ENCODE measurements at regions of chr2 and their contacts with region 1.

Region 1: GRCh38 chr2:44044281-44044720 is 48.5 kb upstream of the LRPPRC start:
- DNase-seq: peak; percentile 50 to 78 (median 71)
- ATAC-seq: peak; percentile 98
- H3K4me3 ChIP-seq: no peak overlapping the region
- H3K4me3 Mint-ChIP-seq: peak overlapping the region in 1 of 10 donors; percentile 48
- H3K27ac ChIP-seq: no peak overlapping the region
- H3K27ac Mint-ChIP-seq: no peak overlapping the region
- H3K4me1 ChIP-seq: no peaks in the 10 kb centered on the region
- H3K4me1 Mint-ChIP-seq: peaks cover 0 to 2% (median 0%) of the 10 kb centered on the region in 7 donors
- H3K27me3 ChIP-seq: no peaks in the 10 kb centered on the region
- H3K27me3 Mint-ChIP-seq: peaks cover 0 to 3% (median 0%) of the 10 kb centered on the region in 5 donors

Region 2: DNA sequence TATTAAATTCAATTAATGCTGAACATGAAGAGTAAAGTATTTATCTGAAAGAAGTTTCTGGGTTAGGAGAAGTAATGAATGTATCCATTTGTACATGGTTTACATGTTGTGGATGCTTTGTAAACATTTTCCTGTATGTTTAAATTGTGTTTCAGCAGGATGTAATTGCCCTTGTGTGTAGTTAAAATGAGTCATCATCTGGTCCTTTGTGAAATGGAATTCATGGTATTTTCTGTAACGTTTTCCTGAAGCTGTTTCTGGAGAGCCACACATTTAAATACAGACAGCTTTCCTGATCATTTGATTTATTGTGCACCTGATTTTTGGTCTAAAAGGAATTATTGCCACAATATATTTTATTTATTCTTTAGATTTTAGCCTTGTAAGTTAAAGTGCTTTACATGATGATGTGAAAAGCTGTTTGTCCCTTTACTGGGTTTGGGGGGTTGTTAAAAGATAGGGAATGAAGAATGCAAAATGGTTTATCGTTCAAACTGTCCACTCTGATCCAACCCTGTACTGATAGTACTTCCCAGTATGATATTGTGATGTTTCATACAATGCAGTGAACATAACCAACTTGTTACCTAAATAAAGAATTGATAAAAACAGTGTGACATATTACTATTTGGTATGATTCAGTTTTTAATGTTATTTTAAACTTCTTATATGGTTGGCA is 189.3 kb after region 1 on chr2:
- CTCF ChIA-PET with region 1: no interaction called
- POLR2A ChIA-PET with region 1: no interaction called
- intact Hi-C with region 1: no loop called
- DNase-seq: no peak
- ATAC-seq: no peak
- H3K4me3 ChIP-seq: no peak overlapping the region
- H3K4me3 Mint-ChIP-seq: no peak overlapping the region
- H3K27ac ChIP-seq: no peak overlapping the region
- H3K27ac Mint-ChIP-seq: peak overlapping the region in 4 of 9 donors; percentile 25 to 71 (median 48)
- H3K4me1 ChIP-seq: peaks cover 16 to 17% of the 10 kb centered on the region in 2 donors
- H3K4me1 Mint-ChIP-seq: peaks cover 6 to 46% (median 36%) of the 10 kb centered on the region in 7 donors
- H3K27me3 ChIP-seq: no peaks in the 10 kb centered on the region
- H3K27me3 Mint-ChIP-seq: no peaks in the 10 kb centered on the region

Region 3: GRCh38 chr2:44244129-44244871 is 200.0 kb after region 1 on chr2:
- CTCF ChIA-PET with region 1: no interaction called
- POLR2A ChIA-PET with region 1: no interaction called
- intact Hi-C with region 1: loop called (anchors 1 kb)
- DNase-seq: peak; percentile 12 to 75 (median 64)
- ATAC-seq: peak; percentile 96
- H3K4me3 ChIP-seq: peak overlapping the region; percentile 55
- H3K4me3 Mint-ChIP-seq: peak overlapping the region; percentile 71 to 95 (median 87)
- H3K27ac ChIP-seq: peak overlapping the region; percentile 64
- H3K27ac Mint-ChIP-seq: peak overlapping the region in 8 of 9 donors; percentile 39 to 89 (median 74)
- H3K4me1 ChIP-seq: peaks cover 6 to 9% of the 10 kb centered on the region in 2 donors
- H3K4me1 Mint-ChIP-seq: peaks cover 7 to 41% (median 33%) of the 10 kb centered on the region in 7 donors
- H3K27me3 ChIP-seq: no peaks in the 10 kb centered on the region
- H3K27me3 Mint-ChIP-seq: peaks cover 0 to 7% (median 0%) of the 10 kb centered on the region in 5 donors

Region 4: DNA sequence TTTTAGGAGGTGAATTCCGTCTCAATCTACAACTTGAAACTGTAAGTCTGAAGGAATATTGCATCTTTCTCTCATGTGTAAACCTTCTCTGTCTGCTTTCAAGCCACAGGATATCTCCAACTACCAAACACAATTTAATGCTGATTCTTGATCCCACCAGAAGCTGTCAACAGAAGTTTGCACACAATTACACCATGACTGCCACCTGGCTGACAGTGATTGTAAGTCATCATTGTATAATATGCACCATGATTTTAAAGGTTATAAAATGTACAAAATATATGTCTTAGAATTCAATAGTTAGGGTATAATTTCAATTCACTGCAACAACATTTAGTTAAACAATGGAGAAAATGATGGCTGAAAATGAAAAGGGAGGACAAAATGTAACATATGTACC is 298.6 kb after region 1 on chr2:
- CTCF ChIA-PET with region 1: interaction called, 9 read pairs
- POLR2A ChIA-PET with region 1: no interaction called
- intact Hi-C with region 1: loop called (anchors 1 kb)
- DNase-seq: peak in 7 of 9 donors; percentile 14 to 45 (median 33)
- ATAC-seq: peak; percentile 60
- H3K4me3 ChIP-seq: no peak overlapping the region
- H3K4me3 Mint-ChIP-seq: no peak overlapping the region
- H3K27ac ChIP-seq: no peak overlapping the region
- H3K27ac Mint-ChIP-seq: peak overlapping the region in 2 of 9 donors; percentile 5 to 26
- H3K4me1 ChIP-seq: no peaks in the 10 kb centered on the region
- H3K4me1 Mint-ChIP-seq: peaks cover 0 to 17% (median 0%) of the 10 kb centered on the region in 7 donors
- H3K27me3 ChIP-seq: no peaks in the 10 kb centered on the region
- H3K27me3 Mint-ChIP-seq: no peaks in the 10 kb centered on the region

Region 5: DNA sequence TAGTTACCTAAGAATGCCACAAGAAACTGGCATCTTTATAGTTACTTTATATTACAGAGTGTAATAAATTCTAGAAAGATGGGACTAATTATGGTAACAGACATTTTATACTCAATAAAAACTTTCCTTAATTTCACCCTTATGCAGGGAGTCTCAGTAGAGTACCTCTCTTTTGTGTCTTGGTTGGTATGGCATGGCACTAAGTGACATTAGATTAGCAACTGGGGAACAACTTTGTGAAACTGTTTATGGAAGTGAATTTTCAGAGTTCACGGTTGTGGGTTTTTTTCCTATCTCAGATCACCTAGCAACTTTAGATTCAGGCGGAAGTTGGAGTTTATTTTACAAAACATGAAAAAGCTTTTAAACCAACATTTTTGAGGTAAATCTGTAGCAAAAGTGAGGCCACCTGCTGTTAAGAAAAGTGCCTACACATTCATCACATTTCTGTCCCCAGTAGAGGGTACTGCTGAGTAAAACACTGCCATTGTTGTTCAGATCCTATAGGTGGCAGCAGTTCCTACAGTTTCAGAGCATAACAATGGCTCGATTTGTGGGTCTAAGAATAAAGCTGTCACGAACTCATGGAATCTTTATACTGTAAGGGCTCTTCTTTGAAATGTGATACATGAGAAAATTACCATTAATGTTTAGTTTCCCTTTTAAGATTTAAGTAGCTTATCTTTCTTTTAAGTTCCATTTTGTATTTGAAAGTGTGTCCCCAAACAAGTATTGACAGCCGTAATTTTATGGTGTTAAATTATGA is 435.0 kb after region 1 on chr2:
- CTCF ChIA-PET with region 1: interaction called, 4 read pairs
- POLR2A ChIA-PET with region 1: no interaction called
- intact Hi-C with region 1: loop called (anchors 1 kb)
- DNase-seq: peak in 8 of 9 donors; percentile 23 to 79 (median 68)
- ATAC-seq: peak; percentile 100
- H3K4me3 ChIP-seq: no peak overlapping the region
- H3K4me3 Mint-ChIP-seq: peak overlapping the region in 1 of 10 donors; percentile 8
- H3K27ac ChIP-seq: no peak overlapping the region
- H3K27ac Mint-ChIP-seq: peak overlapping the region in 5 of 9 donors; percentile 5 to 55 (median 38)
- H3K4me1 ChIP-seq: peaks cover 0 to 4% of the 10 kb centered on the region in 2 donors
- H3K4me1 Mint-ChIP-seq: peaks cover 0 to 11% (median 6%) of the 10 kb centered on the region in 7 donors
- H3K27me3 ChIP-seq: no peaks in the 10 kb centered on the region
- H3K27me3 Mint-ChIP-seq: no peaks in the 10 kb centered on the region

Region 6: GRCh38 chr2:45494269-45494977 is 1450.1 kb after region 1 on chr2:
- CTCF ChIA-PET with region 1: no interaction called
- POLR2A ChIA-PET with region 1: no interaction called
- intact Hi-C with region 1: loop called in 1 of 2 experiments (anchors 1 kb)
- DNase-seq: peak in 6 of 9 donors; percentile 17 to 46 (median 28)
- ATAC-seq: peak; percentile 65
- H3K4me3 ChIP-seq: no peak overlapping the region
- H3K4me3 Mint-ChIP-seq: no peak overlapping the region
- H3K27ac ChIP-seq: no peak overlapping the region
- H3K27ac Mint-ChIP-seq: peak overlapping the region in 2 of 9 donors; percentile 23 to 33
- H3K4me1 ChIP-seq: no peaks in the 10 kb centered on the region
- H3K4me1 Mint-ChIP-seq: peaks cover 3 to 17% (median 10%) of the 10 kb centered on the region in 7 donors
- H3K27me3 ChIP-seq: no peaks in the 10 kb centered on the region
- H3K27me3 Mint-ChIP-seq: no peaks in the 10 kb centered on the region